ENCODE measurements at regions of chr19 and their contacts with region 1.

Region 1: DNA sequence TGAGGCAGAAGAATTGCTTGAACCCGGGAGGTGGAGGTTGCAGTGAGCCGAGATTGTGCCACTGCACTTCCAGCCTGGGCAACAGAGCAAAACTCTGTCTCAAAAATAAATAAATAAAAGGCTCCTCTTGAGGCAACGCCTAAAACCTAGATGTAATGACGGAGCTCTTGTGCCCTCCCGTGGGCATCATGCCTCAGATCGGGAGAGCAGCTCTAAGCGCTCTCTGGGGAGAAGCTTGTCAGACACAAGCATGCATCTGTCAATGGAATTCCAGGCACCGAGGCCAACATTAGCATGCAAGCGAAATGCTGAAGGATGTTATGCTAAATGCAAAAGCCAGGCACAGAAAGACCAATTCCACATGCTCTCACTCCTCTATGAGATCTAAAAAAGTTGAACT is 45.6 kb upstream of the MRI1 start:
- DNase-seq: peak; percentile 42 to 90 (median 75)

Region 2: GRCh38 chr19:13597640-13598039 is 121.1 kb before region 1 on chr19:
- intact Hi-C with region 1: loop called (anchors 5 kb)
- DNase-seq: peak in 40 of 42 donors; percentile 21 to 80 (median 62)

Measured in head of caudate nucleus (tissue), 42 donors.